ENCODE measurements at regions of chr19 and their contacts with region 1.

Region 1: GRCh38 chr19:12365236-12366162 is at the start of gene ZNF442:
- DNase-seq: peak; percentile 83 to 98 (median 96)
- H3K4me3 ChIP-seq: peak within 1 kb of the TSS; percentile 68 to 97 (median 86)
- H3K27ac ChIP-seq: peak within 1 kb of the TSS in 57 of 59 donors; percentile 25 to 94 (median 84)
- H3K27me3 ChIP-seq: no peaks in the 10 kb centered on the region
- CTCF ChIP-seq: peak; percentile 15 to 70 (median 54)
- total RNA-seq, gene ZNF442: 1.8 to 12.5 (median 4.0) TPM

Region 2: GRCh38 chr19:12064590-12065538 is 300.6 kb before region 1 on chr19 and contains the start of gene ZNF844:
- intact Hi-C with region 1: loop called in 1 of 2 experiments (anchors 10 kb)
- DNase-seq: peak; percentile 97 to 99 (median 98)
- H3K4me3 ChIP-seq: peak within 1 kb of the TSS; percentile 56 to 95 (median 80)
- H3K27ac ChIP-seq: peak within 1 kb of the TSS; percentile 58 to 97 (median 90)
- H3K27me3 ChIP-seq: no peaks in the 10 kb centered on the region
- CTCF ChIP-seq: peak in 16 of 56 donors; percentile 6 to 42 (median 26)
- total RNA-seq, gene ZNF844: 7.1 to 44.3 (median 13.7) TPM

Region 3: GRCh38 chr19:12294249-12295158 is 71.0 kb before region 1 on chr19 and contains the start of gene ZNF44:
- intact Hi-C with region 1: loop called in 1 of 2 experiments (anchors 5 kb)
- DNase-seq: peak; percentile 93 to 99 (median 98)
- H3K4me3 ChIP-seq: peak within 1 kb of the TSS; percentile 71 to 100 (median 97)
- H3K27ac ChIP-seq: peak within 1 kb of the TSS in 56 of 59 donors; percentile 34 to 95 (median 82)
- H3K27me3 ChIP-seq: no peaks in the 10 kb centered on the region
- CTCF ChIP-seq: peak in 11 of 56 donors; percentile 6 to 36 (median 17)
- total RNA-seq, gene ZNF44: 8.7 to 28.5 (median 16.1) TPM

Region 4: GRCh38 chr19:12333162-12334159 is 32.0 kb before region 1 on chr19 and contains the start of gene ZNF563:
- intact Hi-C with region 1: loop called (anchors 1 to 5 kb)
- DNase-seq: peak; percentile 96 to 99 (median 99)
- H3K4me3 ChIP-seq: peak within 1 kb of the TSS; percentile 52 to 99 (median 91)
- H3K27ac ChIP-seq: peak within 1 kb of the TSS in 58 of 59 donors; percentile 17 to 95 (median 82)
- H3K27me3 ChIP-seq: no peaks in the 10 kb centered on the region
- CTCF ChIP-seq: peak in 17 of 56 donors; percentile 4 to 45 (median 19)
- total RNA-seq, gene ZNF563: 2.7 to 11.4 (median 5.3) TPM

Region 5: DNA sequence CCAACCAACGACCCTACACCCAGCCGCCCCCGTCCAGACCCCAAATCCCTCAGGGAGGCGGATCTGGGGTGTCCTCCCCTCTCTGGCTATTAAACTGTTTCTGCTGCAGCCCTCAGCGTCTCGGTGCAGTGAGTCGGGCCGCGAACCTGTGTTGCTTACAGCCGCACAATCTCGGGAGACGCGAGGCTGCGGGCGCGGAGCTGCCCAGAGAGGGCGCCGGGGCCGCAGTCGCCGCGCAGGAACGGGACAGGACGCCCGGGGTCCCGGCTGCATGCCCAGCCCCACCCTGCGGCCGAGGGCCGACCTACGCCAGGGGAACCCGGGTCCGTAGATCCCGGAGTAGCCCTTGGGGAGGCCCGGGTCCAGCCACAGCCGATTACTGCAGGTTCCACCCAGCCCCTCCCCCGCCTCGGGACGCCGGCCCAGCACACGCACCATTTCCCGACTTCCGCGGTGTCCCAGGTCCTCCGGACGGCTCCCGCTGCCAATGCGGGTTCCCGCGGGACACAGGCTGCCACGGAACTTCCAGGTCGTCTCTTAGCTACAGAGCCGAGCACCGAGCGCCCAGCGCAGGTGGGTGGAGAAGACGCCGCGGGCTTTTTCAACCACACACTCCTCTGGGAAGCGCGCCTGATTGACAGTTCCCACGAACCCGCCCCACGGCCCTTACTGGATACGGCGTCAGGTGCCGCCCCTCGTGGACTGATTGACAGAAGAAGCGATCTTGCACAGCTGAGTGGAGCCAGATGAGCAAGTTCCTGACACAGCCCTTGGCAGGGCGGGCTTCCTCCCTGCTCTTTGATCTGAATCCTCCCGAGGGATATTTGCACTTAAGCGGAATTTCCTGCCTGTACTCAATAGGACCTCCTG is 35.4 kb after region 1 on chr19 and contains the start of gene ZNF799:
- intact Hi-C with region 1: loop called in 1 of 2 experiments (anchors 5 kb)
- DNase-seq: peak; percentile 96 to 99 (median 99)
- H3K4me3 ChIP-seq: peak within 1 kb of the TSS; percentile 35 to 92 (median 82)
- H3K27ac ChIP-seq: peak within 1 kb of the TSS in 55 of 59 donors; percentile 14 to 90 (median 73)
- H3K27me3 ChIP-seq: no peaks in the 10 kb centered on the region
- CTCF ChIP-seq: peak in 23 of 56 donors; percentile 10 to 52 (median 17)
- total RNA-seq, gene ZNF799: 2.2 to 7.1 (median 4.3) TPM

Region 6: GRCh38 chr19:12453491-12453890 is 88.0 kb after region 1 on chr19:
- intact Hi-C with region 1: no loop called
- DNase-seq: no peak
- H3K4me3 ChIP-seq: no peak overlapping the region
- H3K27ac ChIP-seq: no peak overlapping the region
- H3K27me3 ChIP-seq: no peaks in the 10 kb centered on the region
- CTCF ChIP-seq: no peak